HepG2 (cell line): ENCODE measurements at regions of chr4 and their contacts with region 1.

Region 1: DNA sequence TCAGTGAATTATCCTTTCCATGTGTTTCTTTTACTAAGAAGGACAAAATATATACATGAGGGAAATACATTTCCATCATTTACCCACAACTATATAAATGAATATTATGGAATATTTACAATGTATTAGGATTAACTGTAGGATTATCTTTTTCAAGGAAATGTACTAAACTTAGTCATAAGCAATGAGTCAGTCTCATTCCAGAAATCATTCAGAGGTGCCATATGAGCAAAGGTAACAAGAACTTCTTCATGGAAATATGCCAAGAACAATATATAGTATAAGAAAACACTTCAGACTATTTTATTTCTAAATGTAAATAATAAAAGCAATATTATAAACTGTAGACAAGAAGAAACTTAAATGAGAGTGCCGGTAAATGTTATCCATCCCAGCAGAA is 67.1 kb downstream of the USP38 start:
- DNase-seq: no peak
- ATAC-seq: no peak
- H3K4me3 ChIP-seq: no peak overlapping the region
- H3K27ac ChIP-seq: no peak overlapping the region
- H3K4me1 ChIP-seq: no peaks in the 10 kb centered on the region
- H3K27me3 ChIP-seq: no peaks in the 10 kb centered on the region; a peak in 2 of 5 replicates
- CTCF ChIP-seq: no peak
- EP300 ChIP-seq: no peak
- POLR2A ChIP-seq: no peak
- RAD21 ChIP-seq: no peak

Region 2: GRCh38 chr4:141797966-141798365 is 1453.8 kb before region 1 on chr4:
- CTCF ChIA-PET with region 1: no interaction called
- POLR2A ChIA-PET with region 1: no interaction called
- in situ Hi-C with region 1: no loop called
- intact Hi-C with region 1: no loop called
- DNase-seq: no peak
- ATAC-seq: no peak
- H3K4me3 ChIP-seq: no peak overlapping the region
- H3K27ac ChIP-seq: no peak overlapping the region
- H3K4me1 ChIP-seq: no peaks in the 10 kb centered on the region
- H3K27me3 ChIP-seq: no peaks in the 10 kb centered on the region
- CTCF ChIP-seq: no peak
- EP300 ChIP-seq: no peak
- POLR2A ChIP-seq: no peak
- RAD21 ChIP-seq: no peak

Region 3: GRCh38 chr4:143207557-143207956 is 44.2 kb before region 1 on chr4:
- CTCF ChIA-PET with region 1: interaction called, 4 read pairs
- POLR2A ChIA-PET with region 1: no interaction called
- in situ Hi-C with region 1: no loop called
- intact Hi-C with region 1: loop called (anchors 2 kb)
- DNase-seq: peak; percentile 20
- ATAC-seq: peak; percentile 67; the same call in 2 of the 3 replicates
- H3K4me3 ChIP-seq: no peak overlapping the region
- H3K27ac ChIP-seq: no peak overlapping the region
- H3K4me1 ChIP-seq: no peaks in the 10 kb centered on the region
- H3K27me3 ChIP-seq: no peaks in the 10 kb centered on the region; a peak in 1 of 5 replicates
- CTCF ChIP-seq: peak; percentile 37
- EP300 ChIP-seq: no peak
- POLR2A ChIP-seq: no peak
- RAD21 ChIP-seq: no peak